ENCODE measurements at regions of chr2 and their contacts with region 1.

Region 1: GRCh38 chr2:96554293-96555145 is 18.0 kb downstream of the ARID5A start:
- DNase-seq: no peak
- H3K4me3 ChIP-seq: no peak overlapping the region
- H3K27me3 ChIP-seq: no peaks in the 10 kb centered on the region
- CTCF ChIP-seq: peak; percentile 93

Region 2: DNA sequence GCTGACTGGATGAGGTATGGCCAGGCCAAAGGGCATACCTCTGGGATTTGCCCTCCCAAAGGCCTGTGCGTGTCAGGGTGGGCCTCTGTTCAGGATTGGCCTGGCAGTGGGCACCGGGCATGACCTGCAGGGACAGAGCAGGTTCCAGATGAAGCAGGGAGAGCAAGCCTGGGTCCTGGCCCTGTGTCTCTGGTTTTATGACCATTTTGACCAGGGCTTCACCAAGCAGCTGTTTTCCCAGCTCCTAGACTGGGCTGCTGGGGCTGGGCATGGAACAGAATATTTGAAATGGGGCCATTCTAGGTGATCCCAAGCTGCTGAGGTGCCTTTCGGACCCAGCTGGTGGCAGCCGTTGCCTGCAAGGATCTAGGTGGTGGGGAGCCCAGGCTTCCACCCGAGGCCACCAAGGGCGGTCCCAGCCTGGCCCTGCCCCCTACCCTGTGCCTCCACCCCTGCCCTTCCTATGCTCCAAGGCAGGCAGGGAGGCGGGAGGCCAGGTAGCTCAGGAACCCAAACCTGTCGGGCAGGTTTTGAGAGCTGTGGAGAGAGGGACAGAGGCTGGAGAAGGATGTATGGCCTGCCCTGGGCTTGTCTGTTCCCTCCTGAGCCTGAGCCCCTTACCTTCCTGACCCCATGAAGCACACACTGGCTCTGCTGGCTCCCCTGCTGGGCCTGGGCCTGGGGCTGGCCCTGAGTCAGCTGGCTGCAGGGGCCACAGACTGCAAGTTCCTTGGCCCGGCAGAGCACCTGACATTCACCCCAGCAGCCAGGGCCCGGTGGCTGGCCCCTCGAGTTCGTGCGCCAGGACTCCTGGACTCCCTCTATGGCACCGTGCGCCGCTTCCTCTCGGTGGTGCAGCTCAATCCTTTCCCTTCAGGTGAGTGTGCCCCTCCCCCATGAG is 1280.3 kb before region 1 on chr2 and contains the start of gene PROM2:
- CTCF ChIA-PET with region 1: no interaction called
- POLR2A ChIA-PET with region 1: no interaction called
- DNase-seq: no peak
- H3K4me3 ChIP-seq: no peak within 1 kb of the TSS
- H3K27me3 ChIP-seq: no peaks in the 10 kb centered on the region; the same call in 1 of the 2 replicates
- CTCF ChIP-seq: no peak
- polyA plus RNA-seq, gene PROM2: 0.32 and 0.50 TPM in 2 replicates

Region 3: DNA sequence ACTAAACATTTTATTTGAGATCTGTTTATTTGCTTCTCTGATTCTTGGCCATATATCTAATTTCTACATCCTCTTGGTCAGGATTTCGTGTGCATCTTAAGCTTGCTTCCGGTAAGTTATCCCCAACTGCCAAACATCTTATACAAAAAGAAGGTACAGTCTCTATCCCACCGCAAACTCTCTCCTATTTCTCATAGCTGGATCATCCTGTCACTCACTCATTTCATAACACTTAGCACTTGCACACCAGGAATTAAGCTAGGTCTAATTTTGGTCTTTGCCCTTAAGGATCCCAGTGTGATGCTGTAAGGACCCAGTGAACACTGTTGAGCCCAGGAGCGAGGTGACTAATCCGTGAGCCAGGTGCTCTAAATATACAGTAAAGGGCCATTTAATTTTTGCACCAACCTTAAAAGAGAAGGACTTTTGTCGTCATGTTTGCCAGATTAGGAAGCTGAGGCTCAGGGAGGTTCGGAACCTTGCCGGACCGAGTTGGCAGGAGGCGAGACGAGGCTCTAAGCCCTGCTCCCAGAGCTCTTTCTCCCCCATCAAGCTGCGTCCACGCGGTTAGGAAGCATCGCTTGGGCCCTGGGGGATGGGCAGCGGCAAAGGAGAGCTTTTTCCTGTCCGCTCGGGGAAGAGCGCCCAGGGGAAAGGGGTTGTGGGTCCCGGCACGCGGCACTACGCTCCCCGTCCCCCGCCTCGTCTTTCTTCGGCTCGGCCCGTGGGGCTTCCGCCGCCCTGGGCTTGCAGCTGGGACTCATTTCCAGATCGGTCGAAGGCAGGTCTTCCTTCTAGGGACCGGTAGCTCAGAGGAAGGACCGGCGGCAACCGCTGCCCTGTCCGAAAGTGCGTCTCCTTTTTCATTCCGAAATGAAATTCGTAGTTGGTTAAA is 233.5 kb before region 1 on chr2:
- CTCF ChIA-PET with region 1: no interaction called
- POLR2A ChIA-PET with region 1: interaction called, 10 read pairs
- DNase-seq: no peak
- H3K4me3 ChIP-seq: peak overlapping the region; percentile 51
- H3K27me3 ChIP-seq: peaks cover 3% of the 10 kb centered on the region; the same call in 1 of the 2 replicates
- CTCF ChIP-seq: no peak

Region 4: GRCh38 chr2:96407041-96407918 is 147.2 kb before region 1 on chr2:
- CTCF ChIA-PET with region 1: interaction called, 47 read pairs
- POLR2A ChIA-PET with region 1: no interaction called
- DNase-seq: peak; percentile 4
- H3K4me3 ChIP-seq: no peak overlapping the region
- H3K27me3 ChIP-seq: peaks cover 3% of the 10 kb centered on the region
- CTCF ChIP-seq: peak; percentile 90

Region 5: DNA sequence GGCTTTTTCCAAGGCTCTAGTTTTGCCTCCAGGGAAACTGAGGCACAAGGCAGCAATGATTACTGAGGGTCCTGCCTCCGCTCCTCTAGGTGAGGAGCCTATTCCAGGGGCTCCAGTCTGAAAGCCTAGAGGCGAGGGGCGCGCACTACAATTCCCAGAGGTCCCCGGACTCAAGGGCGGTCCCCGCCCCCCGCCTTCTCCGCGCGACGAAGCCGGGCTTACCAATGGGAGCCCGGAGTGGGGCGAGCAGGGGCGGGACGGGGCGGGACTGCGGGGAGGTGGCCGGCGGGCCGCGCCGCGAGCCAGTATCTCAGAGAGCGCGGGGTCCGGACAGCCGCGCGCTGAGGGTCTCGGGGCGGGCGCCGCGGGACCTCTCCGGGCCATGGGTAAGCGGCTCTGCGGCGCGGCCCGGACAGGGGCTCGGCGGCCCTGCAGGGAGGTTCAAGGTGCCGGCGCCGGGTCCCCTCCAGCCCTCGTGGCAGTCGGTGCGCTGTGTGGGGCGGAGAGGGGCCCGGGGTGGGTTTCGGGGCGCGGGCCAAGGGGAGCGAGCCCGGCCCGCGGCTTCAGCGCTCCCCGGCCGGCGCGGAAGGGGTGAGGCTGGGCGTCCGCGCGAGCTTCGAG is 18.0 kb before region 1 on chr2 and contains the start of gene ARID5A:
- CTCF ChIA-PET with region 1: interaction called, 57 read pairs
- POLR2A ChIA-PET with region 1: interaction called, 3 read pairs
- DNase-seq: no peak
- H3K4me3 ChIP-seq: peak within 1 kb of the TSS; percentile 70
- H3K27me3 ChIP-seq: no peaks in the 10 kb centered on the region
- CTCF ChIP-seq: peak; percentile 33; the same call in 1 of the 2 replicates
- polyA plus RNA-seq, gene ARID5A: 10.4 and 19.1 TPM in 2 replicates

Region 6: GRCh38 chr2:96565111-96565510 is 10.6 kb after region 1 on chr2:
- CTCF ChIA-PET with region 1: interaction called, 33 read pairs
- POLR2A ChIA-PET with region 1: interaction called, 5 read pairs
- DNase-seq: no peak
- H3K4me3 ChIP-seq: no peak overlapping the region
- H3K27me3 ChIP-seq: no peaks in the 10 kb centered on the region; the same call in 1 of the 2 replicates
- CTCF ChIP-seq: no peak

Region 7: DNA sequence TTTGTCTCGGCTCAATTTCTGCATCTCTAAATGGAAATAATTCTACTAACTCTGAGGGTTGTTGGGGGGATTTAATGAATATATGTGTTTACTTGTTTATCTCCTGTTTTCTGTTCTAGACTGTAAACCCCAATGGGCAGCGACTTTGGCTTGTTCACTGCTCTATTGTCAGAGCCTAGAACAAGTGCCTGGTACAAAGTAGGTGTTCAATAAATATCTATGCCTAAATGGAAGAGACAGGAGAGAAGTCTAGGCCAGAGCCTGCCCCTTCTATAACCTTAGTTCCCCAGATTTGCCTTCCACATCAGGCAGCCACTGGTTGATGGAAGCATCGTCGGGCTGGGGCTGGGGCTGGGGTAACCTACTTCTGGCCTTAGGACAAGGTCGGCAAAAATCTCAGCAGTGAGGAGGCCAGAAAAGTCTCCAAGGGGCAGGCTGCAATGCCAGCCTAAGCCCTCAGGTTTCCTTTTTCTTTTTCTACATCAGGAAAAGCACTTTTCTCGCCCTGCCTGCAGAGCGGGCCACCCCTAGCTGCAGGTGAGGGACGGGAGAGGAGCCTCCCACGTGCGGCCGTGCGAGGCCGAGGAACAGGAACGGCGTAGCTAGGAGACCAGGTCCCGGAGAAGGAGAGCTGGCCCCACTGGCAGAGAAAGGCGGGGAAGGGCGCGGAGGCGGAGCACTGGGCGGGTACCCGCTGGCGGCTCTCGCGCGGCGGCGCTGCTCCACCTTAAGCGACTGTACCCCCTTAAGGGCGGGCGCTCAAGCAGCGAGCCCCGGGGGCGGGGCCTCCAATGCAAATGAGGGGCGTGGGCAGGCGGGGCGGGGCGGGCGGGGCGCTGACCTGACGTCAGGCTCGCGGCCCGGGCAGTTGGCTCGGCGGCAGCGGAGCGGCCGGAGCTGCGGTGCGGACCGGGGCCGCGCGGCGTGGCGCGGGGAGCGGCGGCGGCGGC is 205.8 kb after region 1 on chr2 and contains the start of gene CNNM4:
- CTCF ChIA-PET with region 1: interaction called, 10 read pairs
- POLR2A ChIA-PET with region 1: no interaction called
- DNase-seq: peak; percentile 43
- H3K4me3 ChIP-seq: peak within 1 kb of the TSS; percentile 70
- H3K27me3 ChIP-seq: no peaks in the 10 kb centered on the region
- CTCF ChIP-seq: peak; percentile 25; the same call in 1 of the 2 replicates
- polyA plus RNA-seq, gene CNNM4: 4.4 and 7.2 TPM in 2 replicates

Measured in BJ (cell line).